ENCODE measurements at regions of chr17 and their contacts with region 1.

Region 1: GRCh38 chr17:5078106-5079028 is at the start of gene ZFP3:
- DNase-seq: peak; percentile 92
- ATAC-seq: peak; percentile 83
- H3K4me3 ChIP-seq: peak within 1 kb of the TSS; percentile 68 to 78 (median 75)
- H3K4me3 Mint-ChIP-seq: peak within 1 kb of the TSS; percentile 81
- H3K27ac ChIP-seq: peak within 1 kb of the TSS; percentile 81 to 86
- H3K27ac Mint-ChIP-seq: peak within 1 kb of the TSS; percentile 95
- H3K4me1 ChIP-seq: peaks cover 8 to 21% of the 10 kb centered on the region in 2 donors
- H3K4me1 Mint-ChIP-seq: peaks cover 30% of the 10 kb centered on the region
- H3K27me3 ChIP-seq: no peaks in the 10 kb centered on the region
- H3K27me3 Mint-ChIP-seq: no peaks in the 10 kb centered on the region
- CTCF ChIP-seq: peak; percentile 64
- total RNA-seq, gene ZFP3: 15.8 and 16.2 TPM in 2 replicates

Region 2: GRCh38 chr17:4903051-4903818 is 175.1 kb before region 1 on chr17 and contains the start of gene CHRNE:
- CTCF ChIA-PET with region 1: no interaction called
- POLR2A ChIA-PET with region 1: no interaction called
- intact Hi-C with region 1: loop called (anchors 1 kb)
- DNase-seq: peak; percentile 87
- ATAC-seq: peak; percentile 38
- H3K4me3 ChIP-seq: peak within 1 kb of the TSS in 1 of 5 experiments; percentile 38
- H3K4me3 Mint-ChIP-seq: peak within 1 kb of the TSS; percentile 72
- H3K27ac ChIP-seq: peak within 1 kb of the TSS in 1 of 2 donors; percentile 22
- H3K27ac Mint-ChIP-seq: peak within 1 kb of the TSS; percentile 82
- H3K4me1 ChIP-seq: peaks cover 45 to 53% of the 10 kb centered on the region in 2 donors
- H3K4me1 Mint-ChIP-seq: peaks cover 45% of the 10 kb centered on the region
- H3K27me3 ChIP-seq: peaks cover 0 to 29% (median 10%) of the 10 kb centered on the region in 4 experiments
- H3K27me3 Mint-ChIP-seq: peaks cover 7% of the 10 kb centered on the region
- CTCF ChIP-seq: peak; percentile 83
- total RNA-seq, gene CHRNE: 0.99 and 1.0 TPM in 2 replicates

Region 3: DNA sequence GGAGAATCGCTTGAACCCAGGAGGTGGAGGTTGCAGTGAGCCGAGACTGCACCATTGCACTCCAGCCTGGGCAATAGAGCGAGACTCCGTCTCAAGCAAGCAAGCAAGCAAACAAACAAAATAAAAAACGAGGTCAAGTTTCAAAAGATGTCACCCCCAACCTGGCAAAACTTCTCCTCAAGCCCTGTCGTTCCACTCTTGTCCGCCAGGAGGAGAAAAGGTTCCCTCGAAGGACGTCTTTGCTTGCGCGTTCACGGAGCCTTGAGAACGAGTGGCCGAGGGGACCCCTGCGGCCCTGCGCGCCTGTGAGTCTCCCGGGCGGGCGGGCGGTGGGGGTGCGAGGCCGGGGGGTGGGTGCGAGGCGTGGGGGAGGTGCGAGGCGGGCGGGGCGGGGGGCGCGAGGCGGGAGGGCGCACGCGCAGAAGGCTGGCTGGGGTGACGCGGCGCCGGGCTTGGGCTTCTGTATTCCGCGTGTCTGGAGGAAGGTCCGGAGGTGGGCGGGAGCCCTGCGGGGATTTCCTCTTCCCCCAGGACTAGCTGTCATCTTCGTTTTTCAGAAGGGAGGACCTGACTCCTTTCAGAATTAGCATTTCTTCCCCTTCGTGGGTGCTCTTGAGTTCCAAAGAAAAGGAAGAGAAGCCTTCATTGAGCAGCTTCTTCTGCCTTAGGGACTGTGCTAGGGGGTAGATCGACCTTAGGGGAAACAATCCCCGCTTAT is 46.8 kb before region 1 on chr17:
- CTCF ChIA-PET with region 1: interaction called, 8 read pairs
- POLR2A ChIA-PET with region 1: interaction called, 6 read pairs
- intact Hi-C with region 1: loop called (anchors 5 kb)
- DNase-seq: peak; percentile 88
- ATAC-seq: peak; percentile 87
- H3K4me3 ChIP-seq: peak overlapping the region; percentile 34 to 67 (median 38)
- H3K4me3 Mint-ChIP-seq: peak overlapping the region; percentile 89
- H3K27ac ChIP-seq: peak overlapping the region; percentile 24 to 62
- H3K27ac Mint-ChIP-seq: peak overlapping the region; percentile 67
- H3K4me1 ChIP-seq: peaks cover 7 to 18% of the 10 kb centered on the region in 2 donors
- H3K4me1 Mint-ChIP-seq: peaks cover 25% of the 10 kb centered on the region
- H3K27me3 ChIP-seq: peaks cover 0 to 21% (median 5%) of the 10 kb centered on the region in 4 experiments
- H3K27me3 Mint-ChIP-seq: no peaks in the 10 kb centered on the region
- CTCF ChIP-seq: peak; percentile 80

Region 4: GRCh38 chr17:5097101-5097834 is 18.9 kb after region 1 on chr17:
- CTCF ChIA-PET with region 1: interaction called, 12 read pairs
- POLR2A ChIA-PET with region 1: interaction called, 5 read pairs
- intact Hi-C with region 1: loop called (anchors 2 kb)
- DNase-seq: peak; percentile 81
- ATAC-seq: peak; percentile 93
- H3K4me3 ChIP-seq: peak overlapping the region; percentile 17 to 79 (median 71)
- H3K4me3 Mint-ChIP-seq: peak overlapping the region; percentile 97
- H3K27ac ChIP-seq: peak overlapping the region; percentile 33 to 76
- H3K27ac Mint-ChIP-seq: peak overlapping the region; percentile 90
- H3K4me1 ChIP-seq: peaks cover 4 to 14% of the 10 kb centered on the region in 2 donors
- H3K4me1 Mint-ChIP-seq: peaks cover 12% of the 10 kb centered on the region
- H3K27me3 ChIP-seq: peaks cover 0 to 3% (median 0%) of the 10 kb centered on the region in 4 experiments
- H3K27me3 Mint-ChIP-seq: no peaks in the 10 kb centered on the region
- CTCF ChIP-seq: no peak

Region 5: GRCh38 chr17:5111402-5112204 is 33.2 kb after region 1 on chr17 and contains the start of gene ZNF232:
- CTCF ChIA-PET with region 1: interaction called, 3 read pairs
- POLR2A ChIA-PET with region 1: interaction called, 4 read pairs
- intact Hi-C with region 1: loop called (anchors 1 kb)
- DNase-seq: peak; percentile 94
- ATAC-seq: peak; percentile 91
- H3K4me3 ChIP-seq: peak within 1 kb of the TSS; percentile 80 to 93 (median 88)
- H3K4me3 Mint-ChIP-seq: peak within 1 kb of the TSS; percentile 86
- H3K27ac ChIP-seq: peak within 1 kb of the TSS; percentile 62 to 74
- H3K27ac Mint-ChIP-seq: peak within 1 kb of the TSS; percentile 70
- H3K4me1 ChIP-seq: peaks cover 15 to 20% of the 10 kb centered on the region in 2 donors
- H3K4me1 Mint-ChIP-seq: peaks cover 25% of the 10 kb centered on the region
- H3K27me3 ChIP-seq: peaks cover 0 to 16% (median 8%) of the 10 kb centered on the region in 4 experiments
- H3K27me3 Mint-ChIP-seq: peaks cover 10% of the 10 kb centered on the region
- CTCF ChIP-seq: no peak
- total RNA-seq, gene ZNF232: 17.4 and 19.3 TPM in 2 replicates

Region 6: GRCh38 chr17:5210614-5211252 is 132.4 kb after region 1 on chr17:
- CTCF ChIA-PET with region 1: no interaction called
- POLR2A ChIA-PET with region 1: no interaction called
- intact Hi-C with region 1: no loop called
- DNase-seq: peak; percentile 62
- ATAC-seq: peak; percentile 65
- H3K4me3 ChIP-seq: peak overlapping the region in 1 of 5 experiments; percentile 4
- H3K4me3 Mint-ChIP-seq: peak overlapping the region; percentile 74
- H3K27ac ChIP-seq: peak overlapping the region; percentile 91
- H3K27ac Mint-ChIP-seq: peak overlapping the region; percentile 93
- H3K4me1 ChIP-seq: peaks cover 64 to 80% of the 10 kb centered on the region in 2 donors
- H3K4me1 Mint-ChIP-seq: peaks cover 75% of the 10 kb centered on the region
- H3K27me3 ChIP-seq: no peaks in the 10 kb centered on the region
- H3K27me3 Mint-ChIP-seq: no peaks in the 10 kb centered on the region
- CTCF ChIP-seq: no peak

Region 7: GRCh38 chr17:5304636-5305035 is 226.3 kb after region 1 on chr17:
- CTCF ChIA-PET with region 1: no interaction called
- POLR2A ChIA-PET with region 1: no interaction called
- intact Hi-C with region 1: loop called (anchors 5 kb)
- DNase-seq: no peak
- ATAC-seq: no peak
- H3K4me3 ChIP-seq: no peak overlapping the region
- H3K4me3 Mint-ChIP-seq: no peak overlapping the region
- H3K27ac ChIP-seq: peak overlapping the region in 1 of 2 donors; percentile 16
- H3K27ac Mint-ChIP-seq: no peak overlapping the region
- H3K4me1 ChIP-seq: peaks cover 28 to 38% of the 10 kb centered on the region in 2 donors
- H3K4me1 Mint-ChIP-seq: peaks cover 63% of the 10 kb centered on the region
- H3K27me3 ChIP-seq: no peaks in the 10 kb centered on the region
- H3K27me3 Mint-ChIP-seq: no peaks in the 10 kb centered on the region
- CTCF ChIP-seq: no peak

Region 8: DNA sequence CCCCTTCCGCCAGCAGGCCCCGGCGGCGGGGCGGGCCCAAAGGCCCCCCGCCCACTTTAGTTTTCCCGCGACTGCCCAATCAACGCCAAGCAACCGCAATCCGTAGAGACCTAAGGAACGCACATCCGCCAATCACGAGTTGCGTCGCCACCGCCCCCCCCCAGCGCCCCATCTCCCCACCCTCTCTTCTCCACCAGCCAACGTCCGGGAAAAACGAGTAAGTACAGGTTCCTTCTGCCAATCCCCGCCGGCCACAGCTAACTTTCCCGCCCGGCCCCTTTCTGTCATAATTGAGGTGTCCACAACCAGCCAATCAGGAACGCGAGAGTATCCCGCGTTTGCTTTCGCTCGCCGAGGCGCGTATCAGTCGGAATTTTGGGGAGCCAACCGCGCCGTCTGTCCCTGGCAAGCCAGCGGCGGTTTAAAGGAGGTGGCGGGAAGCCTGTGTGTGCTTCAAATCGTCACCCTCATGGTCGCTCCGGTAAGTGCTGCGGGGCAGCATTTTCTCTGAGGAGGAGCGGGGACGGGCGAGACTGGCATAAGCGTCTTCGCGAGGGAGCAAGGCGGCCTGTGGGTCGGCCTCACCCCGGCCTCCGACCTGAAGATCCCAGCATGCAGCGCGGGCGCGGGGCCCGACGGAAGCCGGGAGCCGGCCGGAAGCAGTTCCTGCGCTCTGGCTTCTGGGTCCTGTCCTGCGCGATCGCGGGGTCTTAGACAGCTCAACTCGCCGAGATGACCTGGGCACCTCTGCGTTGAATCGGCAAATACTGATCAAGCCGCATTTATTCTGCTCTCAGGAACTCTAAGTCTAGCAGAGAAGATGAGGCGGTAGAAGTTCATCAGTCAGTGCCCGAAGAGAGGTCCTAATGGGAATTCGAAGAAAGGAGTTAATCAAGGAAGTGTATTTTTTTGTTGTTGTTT is 408.1 kb after region 1 on chr17 and contains the start of gene MIS12:
- CTCF ChIA-PET with region 1: no interaction called
- POLR2A ChIA-PET with region 1: no interaction called
- intact Hi-C with region 1: loop called (anchors 2 kb)
- DNase-seq: peak; percentile 98
- ATAC-seq: peak; percentile 90
- H3K4me3 ChIP-seq: peak within 1 kb of the TSS; percentile 90 to 99 (median 92)
- H3K4me3 Mint-ChIP-seq: peak within 1 kb of the TSS; percentile 94
- H3K27ac ChIP-seq: peak within 1 kb of the TSS; percentile 99 to 100
- H3K27ac Mint-ChIP-seq: peak within 1 kb of the TSS; percentile 97
- H3K4me1 ChIP-seq: peaks cover 17 to 26% of the 10 kb centered on the region in 2 donors
- H3K4me1 Mint-ChIP-seq: peaks cover 42% of the 10 kb centered on the region
- H3K27me3 ChIP-seq: no peaks in the 10 kb centered on the region
- H3K27me3 Mint-ChIP-seq: no peaks in the 10 kb centered on the region
- CTCF ChIP-seq: no peak
- total RNA-seq, gene MIS12: 33.2 and 41.1 TPM in 2 replicates

Measured in B cell (primary cell).